GM10248 (cell line): ENCODE measurements at regions of chr1 and their contacts with region 1.

Region 1: DNA sequence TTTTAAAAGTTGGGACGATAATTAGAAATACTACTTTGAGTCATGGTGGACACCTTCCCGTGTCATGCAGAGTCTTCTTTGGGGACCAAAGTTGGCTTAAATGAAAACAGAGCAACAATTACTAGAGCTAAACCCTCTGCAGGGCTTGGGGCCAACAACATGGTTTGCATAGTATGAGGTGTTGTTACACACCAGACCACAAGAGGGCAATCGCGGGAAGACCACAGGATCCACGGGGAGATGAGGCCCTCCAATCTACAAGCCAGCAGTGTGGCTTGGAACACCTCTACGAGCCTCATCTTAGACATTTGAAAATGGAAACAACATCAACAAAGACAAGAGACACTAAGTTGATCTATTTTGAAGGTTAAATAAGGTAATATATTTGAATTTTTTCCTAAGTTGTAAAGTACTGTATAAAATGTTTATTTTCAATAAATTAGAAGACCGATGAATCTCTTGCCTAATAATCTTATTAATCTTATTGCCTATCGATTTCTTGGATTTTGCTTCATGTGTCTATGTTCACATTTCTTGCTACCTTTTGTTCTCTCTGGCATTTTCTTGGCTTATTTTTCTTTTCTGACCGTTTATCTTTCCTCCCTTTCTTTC is 8.2 kb upstream of the SMCP start:
- DNase-seq: peak; percentile 77
- CTCF ChIP-seq: peak; percentile 85

Region 2: GRCh38 chr1:152855661-152856060 is 14.3 kb before region 1 on chr1:
- CTCF ChIA-PET with region 1: interaction called, 20 read pairs
- POLR2A ChIA-PET with region 1: no interaction called
- DNase-seq: no peak
- CTCF ChIP-seq: no peak

Region 3: GRCh38 chr1:152907686-152908601 is 38.0 kb after region 1 on chr1 and contains the start of gene IVL:
- CTCF ChIA-PET with region 1: interaction called, 48 read pairs
- POLR2A ChIA-PET with region 1: no interaction called
- DNase-seq: peak; percentile 65
- CTCF ChIP-seq: no peak

Region 4: GRCh38 chr1:152926091-152926490 is 56.2 kb after region 1 on chr1:
- CTCF ChIA-PET with region 1: interaction called, 131 read pairs
- POLR2A ChIA-PET with region 1: no interaction called
- DNase-seq: peak; percentile 52
- CTCF ChIP-seq: peak; percentile 65

Region 5: GRCh38 chr1:153192697-153193096 is 322.8 kb after region 1 on chr1:
- CTCF ChIA-PET with region 1: interaction called, 56 read pairs
- POLR2A ChIA-PET with region 1: no interaction called
- DNase-seq: no peak
- CTCF ChIP-seq: peak; percentile 50